Activated CD8-positive, alpha-beta T cell treated with anti-CD3 and anti-CD28 coated beads for 36 hours (primary cell): ENCODE measurements at regions of chr12 and their contacts with region 1.

Region 1: DNA sequence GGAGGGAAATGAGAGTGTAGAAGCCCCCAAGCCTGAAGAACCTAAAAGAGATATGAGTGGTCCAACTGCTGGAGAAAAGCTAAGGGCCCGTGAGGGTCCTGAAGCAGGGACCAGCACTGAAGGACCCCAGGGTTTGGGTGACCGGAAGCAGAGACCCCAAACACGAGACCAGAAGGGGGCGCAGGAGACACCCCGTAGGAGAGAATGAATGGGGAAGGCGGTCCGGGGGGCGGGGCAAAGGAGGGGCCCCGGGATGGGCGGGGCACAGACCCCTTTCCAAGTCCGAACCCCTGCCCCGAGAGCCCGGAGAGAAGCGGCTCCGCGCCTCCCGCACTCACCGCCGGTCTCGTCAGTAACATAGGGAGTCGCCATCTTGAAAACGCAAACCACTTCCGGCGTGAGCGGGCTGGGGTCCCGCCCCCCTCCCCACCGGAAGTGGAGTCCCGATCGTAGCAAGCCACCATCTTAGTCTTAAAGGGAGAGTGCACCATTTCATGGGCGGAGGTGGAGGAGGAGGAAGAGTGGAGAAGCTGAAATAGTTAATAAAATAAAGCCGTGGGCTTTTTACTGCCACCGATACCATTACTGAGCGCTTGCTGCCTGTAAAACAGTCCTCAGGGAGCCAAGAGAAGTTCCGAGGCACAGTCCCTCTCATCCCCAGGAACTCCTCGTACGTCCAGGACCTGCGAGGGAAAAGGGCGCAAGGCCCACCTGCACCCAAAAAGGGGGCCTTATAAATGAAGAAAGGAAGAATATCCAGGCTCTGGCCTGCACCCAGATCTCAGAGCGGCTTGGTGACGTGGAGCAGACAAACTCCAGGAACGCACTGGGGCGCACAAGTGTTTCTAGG is 731 bp downstream of the PYM1 start:
- DNase-seq: peak; percentile 98
- ATAC-seq: peak; percentile 58
- H3K4me3 Mint-ChIP-seq: peak overlapping the region; percentile 99
- H3K27ac Mint-ChIP-seq: peak overlapping the region; percentile 99
- H3K4me1 Mint-ChIP-seq: peaks cover 42% of the 10 kb centered on the region
- H3K27me3 Mint-ChIP-seq: no peaks in the 10 kb centered on the region
- CTCF ChIP-seq: peak; percentile 86

Region 2: GRCh38 chr12:55817346-55818139 is 109.4 kb before region 1 on chr12 and contains the starts of genes ORMDL2 and SARNP:
- CTCF ChIA-PET with region 1: interaction called, 34 read pairs
- POLR2A ChIA-PET with region 1: interaction called, 60 read pairs
- intact Hi-C with region 1: no loop called
- DNase-seq: peak; percentile 99
- ATAC-seq: peak; percentile 97
- H3K4me3 Mint-ChIP-seq: no peak within 1 kb of the TSS
- H3K27ac Mint-ChIP-seq: no peak within 1 kb of the TSS
- H3K4me1 Mint-ChIP-seq: peaks cover 40% of the 10 kb centered on the region
- H3K27me3 Mint-ChIP-seq: no peaks in the 10 kb centered on the region
- CTCF ChIP-seq: no peak
- total RNA-seq, gene ORMDL2: 24.2 to 27.0 TPM
- total RNA-seq, gene SARNP: 93.9 to 94.0 TPM

Region 3: GRCh38 chr12:55829967-55830600 is 96.9 kb before region 1 on chr12:
- CTCF ChIA-PET with region 1: interaction called, 24 read pairs
- POLR2A ChIA-PET with region 1: interaction called, 19 read pairs
- intact Hi-C with region 1: loop called (anchors 2 kb)
- DNase-seq: peak; percentile 61
- ATAC-seq: peak; percentile 26
- H3K4me3 Mint-ChIP-seq: peak overlapping the region; percentile 97
- H3K27ac Mint-ChIP-seq: peak overlapping the region; percentile 93
- H3K4me1 Mint-ChIP-seq: peaks cover 44% of the 10 kb centered on the region
- H3K27me3 Mint-ChIP-seq: no peaks in the 10 kb centered on the region
- CTCF ChIP-seq: no peak

Region 4: GRCh38 chr12:55915482-55915859 is 11.5 kb before region 1 on chr12:
- CTCF ChIA-PET with region 1: interaction called, 21 read pairs
- POLR2A ChIA-PET with region 1: interaction called, 15 read pairs
- intact Hi-C with region 1: no loop called
- DNase-seq: no peak
- ATAC-seq: no peak
- H3K4me3 Mint-ChIP-seq: no peak overlapping the region
- H3K27ac Mint-ChIP-seq: peak overlapping the region; percentile 59
- H3K4me1 Mint-ChIP-seq: peaks cover 33% of the 10 kb centered on the region
- H3K27me3 Mint-ChIP-seq: no peaks in the 10 kb centered on the region
- CTCF ChIP-seq: no peak

Region 5: DNA sequence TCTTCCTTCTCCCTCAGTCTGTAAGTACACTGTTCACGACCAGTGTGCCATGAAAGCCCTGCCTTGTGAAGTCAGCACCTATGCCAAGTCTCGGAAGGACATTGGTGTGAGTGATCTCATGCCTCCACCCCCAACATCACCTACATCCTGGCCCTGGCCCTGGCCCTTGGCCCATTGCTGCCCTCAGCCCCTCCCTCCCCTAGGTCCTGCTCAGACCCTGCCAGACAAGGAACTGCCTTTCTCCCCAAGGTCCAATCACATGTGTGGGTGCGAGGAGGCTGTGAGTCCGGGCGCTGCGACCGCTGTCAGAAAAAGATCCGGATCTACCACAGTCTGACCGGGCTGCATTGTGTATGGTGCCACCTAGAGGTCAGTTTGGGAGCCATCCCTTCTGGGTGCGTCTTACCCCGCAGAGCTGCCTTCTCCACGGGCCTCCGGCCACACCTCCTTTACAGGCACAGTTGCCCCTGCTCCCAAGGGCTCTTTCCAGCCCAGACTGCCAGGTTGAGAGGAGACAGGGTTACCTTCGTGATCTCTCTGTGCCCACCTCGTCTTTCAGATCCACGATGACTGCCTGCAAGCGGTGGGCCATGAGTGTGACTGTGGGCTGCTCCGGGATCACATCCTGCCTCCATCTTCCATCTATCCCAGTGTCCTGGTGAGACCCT is 13.2 kb after region 1 on chr12:
- CTCF ChIA-PET with region 1: interaction called, 36 read pairs
- POLR2A ChIA-PET with region 1: interaction called, 29 read pairs
- intact Hi-C with region 1: no loop called
- DNase-seq: peak; percentile 90
- ATAC-seq: peak; percentile 86
- H3K4me3 Mint-ChIP-seq: peak overlapping the region; percentile 22
- H3K27ac Mint-ChIP-seq: peak overlapping the region; percentile 99
- H3K4me1 Mint-ChIP-seq: peaks cover 80% of the 10 kb centered on the region
- H3K27me3 Mint-ChIP-seq: no peaks in the 10 kb centered on the region
- CTCF ChIP-seq: peak; percentile 84

Region 6: DNA sequence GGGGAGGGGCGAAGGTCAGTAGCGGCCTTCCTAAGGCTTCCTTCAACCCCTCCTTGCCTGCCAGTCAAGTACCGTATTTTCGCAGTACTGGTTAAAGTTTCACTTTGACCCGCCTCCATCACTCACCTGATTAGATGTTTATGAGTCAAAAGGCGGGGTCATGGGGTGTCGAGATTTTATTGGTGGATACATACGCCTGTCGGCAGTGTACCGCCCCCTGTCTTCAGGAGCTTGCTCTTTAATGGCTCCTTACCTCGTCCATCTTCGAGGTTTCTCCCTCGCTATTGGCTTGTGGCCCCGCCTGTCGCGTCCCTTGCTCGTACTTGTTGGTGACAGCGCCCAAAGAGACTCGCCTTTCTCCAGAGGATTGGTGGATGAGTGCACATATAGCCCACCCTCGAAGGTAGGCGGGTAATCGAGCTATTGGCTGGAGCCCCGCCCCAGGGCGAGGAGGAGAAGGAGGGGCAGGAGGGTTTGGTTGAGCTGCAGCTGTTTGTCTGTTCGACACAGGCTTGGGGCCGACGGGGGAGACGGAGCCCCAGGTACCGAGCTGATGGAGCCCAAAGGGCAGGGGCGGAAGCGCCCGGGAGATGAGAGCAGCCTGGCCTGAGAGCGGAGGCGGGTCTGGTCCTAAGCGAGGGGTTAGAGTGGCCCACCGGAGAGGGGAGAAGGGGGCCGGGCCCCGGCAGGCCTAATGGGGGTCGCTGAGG is 46.8 kb after region 1 on chr12 and contains the start of gene RAB5B:
- CTCF ChIA-PET with region 1: interaction called, 13 read pairs
- POLR2A ChIA-PET with region 1: interaction called, 4 read pairs
- intact Hi-C with region 1: loop called (anchors 2 kb)
- DNase-seq: peak; percentile 99
- ATAC-seq: peak; percentile 93
- H3K4me3 Mint-ChIP-seq: no peak within 1 kb of the TSS
- H3K27ac Mint-ChIP-seq: no peak within 1 kb of the TSS
- H3K4me1 Mint-ChIP-seq: peaks cover 24% of the 10 kb centered on the region
- H3K27me3 Mint-ChIP-seq: no peaks in the 10 kb centered on the region
- CTCF ChIP-seq: no peak
- total RNA-seq, gene RAB5B: 26.0 to 32.4 TPM

Region 7: DNA sequence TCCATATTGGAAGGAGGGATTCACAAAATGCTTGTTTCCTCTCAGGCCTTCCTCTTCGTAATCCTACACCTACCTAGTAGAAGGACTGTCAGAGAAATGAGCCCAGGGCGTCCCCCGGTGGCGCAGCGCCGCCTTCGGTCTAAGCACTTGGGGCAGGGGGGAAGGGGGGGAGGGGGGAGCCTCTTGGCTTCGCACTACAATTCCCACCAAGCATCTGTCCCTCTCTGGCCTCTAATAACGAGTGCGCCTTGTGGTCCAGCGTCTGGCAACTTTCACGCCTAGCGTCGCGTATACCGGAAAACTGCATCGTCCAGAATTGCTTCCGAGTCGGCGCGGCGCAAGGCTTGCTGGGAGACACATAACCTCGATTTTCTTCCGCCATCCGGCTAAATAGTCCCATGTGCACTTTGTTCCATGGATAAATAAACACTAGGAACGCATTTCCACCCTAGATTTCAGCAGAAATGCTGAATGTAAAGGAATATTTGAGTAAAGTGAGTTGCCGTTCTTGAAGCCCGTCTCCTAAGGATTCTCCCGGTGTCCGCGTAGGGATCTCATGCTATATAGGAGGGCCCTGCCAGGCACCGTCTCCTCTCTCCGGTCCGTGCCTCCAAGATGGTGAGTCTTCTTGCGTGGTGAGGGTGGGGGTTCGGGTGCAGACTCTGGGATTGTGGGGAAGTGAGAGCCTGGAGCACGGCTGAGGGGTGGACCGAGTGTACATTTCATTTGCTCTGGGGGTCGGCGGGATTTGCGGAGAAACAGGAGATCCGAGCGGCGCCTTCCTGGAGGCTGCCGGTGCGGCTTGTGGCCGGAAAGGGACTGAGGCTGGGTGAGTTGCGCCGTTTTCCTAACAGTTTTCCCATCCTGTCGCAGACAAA is 114.8 kb after region 1 on chr12 and contains the start of gene RPS26:
- CTCF ChIA-PET with region 1: interaction called, 3 read pairs
- POLR2A ChIA-PET with region 1: interaction called, 3 read pairs
- intact Hi-C with region 1: loop called (anchors 2 kb)
- DNase-seq: peak; percentile 97
- ATAC-seq: peak; percentile 90
- H3K4me3 Mint-ChIP-seq: peak within 1 kb of the TSS; percentile 84
- H3K27ac Mint-ChIP-seq: peak within 1 kb of the TSS; percentile 92
- H3K4me1 Mint-ChIP-seq: peaks cover 52% of the 10 kb centered on the region
- H3K27me3 Mint-ChIP-seq: no peaks in the 10 kb centered on the region
- CTCF ChIP-seq: peak; percentile 57
- total RNA-seq, gene RPS26: 29.7 to 29.8 TPM